A673 (cell line): ENCODE measurements at regions of chr21 and their contacts with region 1.

Region 1: DNA sequence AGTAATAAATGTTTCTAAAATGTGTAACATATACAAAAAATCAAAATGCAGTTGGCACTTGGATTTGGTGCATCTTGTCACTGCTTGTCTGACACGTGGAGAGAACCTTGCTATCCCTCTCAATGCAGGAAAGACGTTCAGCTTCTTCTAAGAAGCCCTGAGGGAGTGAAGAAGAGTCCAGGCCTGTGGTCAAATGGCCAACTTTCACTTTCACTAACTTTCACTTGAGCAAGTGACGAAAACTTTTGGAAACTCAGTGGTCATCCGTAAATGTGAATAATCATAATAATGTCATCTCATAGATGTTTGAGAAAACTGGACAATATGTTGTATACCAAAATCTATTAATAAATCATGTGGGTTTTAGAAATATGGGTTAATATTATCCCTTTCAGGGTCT is 61.9 kb downstream of the ERG start:
- DNase-seq: no peak
- H3K4me3 ChIP-seq: no peak overlapping the region
- H3K27ac ChIP-seq: no peak overlapping the region
- H3K4me1 ChIP-seq: no peaks in the 10 kb centered on the region
- H3K27me3 ChIP-seq: no peaks in the 10 kb centered on the region
- CTCF ChIP-seq: no peak

Region 2: GRCh38 chr21:38367646-38368045 is 68.7 kb before region 1 on chr21:
- CTCF ChIA-PET with region 1: no interaction called
- POLR2A ChIA-PET with region 1: no interaction called
- intact Hi-C with region 1: no loop called
- DNase-seq: no peak
- H3K4me3 ChIP-seq: no peak overlapping the region
- H3K27ac ChIP-seq: no peak overlapping the region
- H3K4me1 ChIP-seq: no peaks in the 10 kb centered on the region
- H3K27me3 ChIP-seq: no peaks in the 10 kb centered on the region
- CTCF ChIP-seq: no peak

Region 3: DNA sequence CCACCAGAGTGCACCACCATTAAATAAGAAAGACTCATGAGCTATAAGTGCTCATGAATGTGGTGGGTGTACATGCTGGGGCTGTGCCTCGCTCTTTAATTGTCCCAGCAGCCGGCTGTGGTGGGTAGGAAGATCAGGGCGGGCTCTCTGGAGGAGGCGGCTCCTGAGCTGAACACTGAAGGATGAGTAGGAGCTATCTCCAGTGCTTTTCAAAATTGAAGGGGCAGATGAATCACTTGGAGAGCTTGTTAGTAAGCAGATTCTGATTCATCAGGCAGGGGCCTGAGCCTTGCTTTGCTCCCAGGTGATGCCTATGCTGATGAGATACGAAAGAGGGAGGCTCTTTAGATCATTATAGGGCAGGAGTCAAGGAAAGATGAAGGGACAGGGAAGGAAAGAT is 423.5 kb after region 1 on chr21:
- CTCF ChIA-PET with region 1: no interaction called
- POLR2A ChIA-PET with region 1: interaction called, 17 read pairs
- intact Hi-C with region 1: no loop called
- DNase-seq: no peak
- H3K4me3 ChIP-seq: no peak overlapping the region
- H3K27ac ChIP-seq: no peak overlapping the region
- H3K4me1 ChIP-seq: no peaks in the 10 kb centered on the region
- H3K27me3 ChIP-seq: no peaks in the 10 kb centered on the region
- CTCF ChIP-seq: no peak